ENCODE measurements at regions of chr5 and their contacts with region 1.

Region 1: DNA sequence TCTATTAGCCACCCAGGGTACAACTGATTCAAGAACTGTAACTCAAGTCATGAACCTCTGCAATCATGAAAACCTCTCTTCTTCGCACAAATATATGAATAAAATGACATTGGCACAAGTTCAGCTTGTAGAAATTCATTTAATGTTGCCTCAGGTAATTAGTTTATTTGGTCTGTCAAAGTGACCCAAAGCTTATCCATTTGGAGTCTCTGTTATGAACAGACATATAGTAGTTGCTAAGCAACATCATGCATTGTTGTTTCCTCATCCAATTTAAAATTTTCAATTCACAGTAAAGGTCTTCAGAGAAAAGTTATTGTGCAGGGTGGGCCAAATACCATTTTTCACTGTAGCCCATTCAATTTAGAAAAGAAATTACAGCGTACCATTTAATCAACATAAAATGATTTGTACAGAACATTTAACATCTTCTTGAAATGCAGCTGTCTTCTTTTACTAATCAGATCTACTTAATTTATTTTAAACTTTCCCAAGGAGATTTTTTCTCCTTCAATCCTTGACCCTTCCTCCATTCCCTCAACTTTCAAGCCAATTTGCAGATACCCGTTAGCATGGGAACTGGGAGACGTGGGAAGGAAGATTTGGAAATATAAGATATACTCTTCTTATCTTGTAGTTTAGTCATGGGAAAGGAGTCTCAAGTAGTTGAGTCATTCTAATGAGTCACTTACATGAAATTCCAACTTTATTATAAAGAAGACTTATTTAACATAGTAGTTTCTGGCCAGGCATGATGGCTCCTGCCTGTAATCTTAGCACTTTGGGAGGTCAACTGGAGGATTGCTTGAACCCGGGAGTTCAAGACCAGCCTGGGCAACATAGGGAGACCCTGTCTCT is 231.3 kb downstream of the ATPSCKMT start:
- DNase-seq: no peak
- H3K4me3 Mint-ChIP-seq: no peak overlapping the region
- H3K27ac Mint-ChIP-seq: peak overlapping the region; percentile 88
- H3K4me1 Mint-ChIP-seq: peaks cover 47% of the 10 kb centered on the region
- H3K27me3 Mint-ChIP-seq: no peaks in the 10 kb centered on the region
- CTCF ChIP-seq: no peak

Region 2: DNA sequence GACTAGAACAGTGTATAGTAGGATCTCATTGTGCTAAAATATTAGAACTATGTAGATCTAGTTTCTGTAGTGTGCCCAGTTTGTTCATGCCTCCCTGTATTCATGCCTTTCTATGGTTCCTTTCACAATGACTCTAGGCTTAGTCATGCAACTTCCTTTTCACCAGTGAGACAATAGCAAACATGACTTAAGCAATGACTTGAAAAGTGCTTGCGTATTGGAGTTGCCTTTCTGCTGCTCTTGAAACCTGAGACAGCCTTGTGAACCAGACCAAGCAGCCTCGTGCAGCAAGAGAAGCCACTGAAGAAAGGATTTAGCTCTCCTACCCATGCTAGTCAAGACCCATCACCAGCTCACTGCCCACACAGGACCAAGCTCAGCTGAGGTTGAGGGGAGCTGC is 93.8 kb before region 1 on chr5:
- CTCF ChIA-PET with region 1: no interaction called
- intact Hi-C with region 1: loop called (anchors 2 kb)
- DNase-seq: peak; percentile 58
- H3K4me3 Mint-ChIP-seq: peak overlapping the region; percentile 34
- H3K27ac Mint-ChIP-seq: peak overlapping the region; percentile 90
- H3K4me1 Mint-ChIP-seq: peaks cover 56% of the 10 kb centered on the region
- H3K27me3 Mint-ChIP-seq: no peaks in the 10 kb centered on the region
- CTCF ChIP-seq: no peak